PC-3 (cell line): ENCODE measurements at regions of chr22 and their contacts with region 1.

Region 1: DNA sequence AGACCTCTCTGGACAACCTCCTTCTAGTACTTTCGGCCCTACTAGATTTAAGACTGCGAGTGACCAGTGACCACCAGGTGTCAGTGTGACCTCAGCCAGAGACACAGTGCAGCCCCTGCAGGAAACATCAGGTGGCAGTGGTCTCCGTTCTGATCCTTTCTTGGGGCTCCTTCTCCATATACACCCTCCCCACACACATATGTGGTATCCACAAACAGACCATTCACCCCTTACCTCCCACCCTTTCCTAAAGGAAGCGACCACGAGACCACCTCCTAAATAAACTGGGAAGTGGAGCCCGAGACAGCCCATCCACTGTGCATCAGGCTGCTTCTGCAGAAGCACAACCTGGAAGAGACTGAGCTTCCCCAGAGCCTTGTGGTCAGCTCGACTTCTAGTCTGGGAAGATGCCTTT is 38.5 kb upstream of the CYP2D6 start:
- DNase-seq: peak; percentile 64
- ATAC-seq: peak; percentile 73
- H3K4me3 ChIP-seq: no peak overlapping the region
- H3K27ac ChIP-seq: no peak overlapping the region
- H3K4me1 ChIP-seq: no peaks in the 10 kb centered on the region
- H3K27me3 ChIP-seq: no peaks in the 10 kb centered on the region
- CTCF ChIP-seq: peak; percentile 91

Region 2: DNA sequence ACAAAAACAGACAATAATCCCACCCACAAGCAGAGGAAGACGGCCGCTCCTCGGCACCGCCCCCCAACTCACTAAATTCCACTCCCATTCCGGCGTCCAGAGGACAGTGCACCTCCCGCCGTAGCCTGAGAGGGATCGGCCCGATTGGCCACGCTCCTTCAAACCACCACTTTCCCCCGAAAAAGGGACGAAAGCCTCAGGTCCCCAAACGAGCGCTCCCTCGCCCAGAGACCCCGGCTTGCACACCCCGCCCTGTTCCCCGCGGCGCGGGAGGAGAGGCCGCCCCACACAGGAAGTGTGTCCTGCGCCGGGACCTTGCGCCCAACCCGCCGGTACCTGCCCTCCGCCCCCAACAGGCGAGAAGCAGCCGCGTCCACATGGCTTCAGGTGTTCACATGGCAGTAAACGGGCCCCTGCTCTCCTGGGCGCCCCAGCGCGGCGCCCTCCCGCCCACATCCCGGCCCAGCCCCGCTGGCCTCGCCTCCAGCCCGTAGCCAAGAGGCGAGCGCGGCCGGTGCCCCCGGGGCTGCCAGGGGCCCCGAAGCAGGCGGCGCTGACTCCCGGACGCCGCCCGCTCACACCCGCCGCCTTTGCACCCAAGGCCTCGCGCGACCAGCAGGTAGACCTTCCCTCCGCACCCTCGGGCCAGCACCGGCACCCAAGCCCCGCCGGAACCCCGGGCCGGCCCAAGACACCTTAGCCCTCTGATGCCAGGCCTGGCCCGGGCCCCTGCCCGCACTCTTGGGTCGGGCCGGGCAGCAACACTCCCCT is 100.5 kb after region 1 on chr22:
- CTCF ChIA-PET with region 1: interaction called, 9 read pairs
- POLR2A ChIA-PET with region 1: no interaction called
- intact Hi-C with region 1: loop called (anchors 5 kb)
- DNase-seq: peak; percentile 61
- ATAC-seq: peak; percentile 75
- H3K4me3 ChIP-seq: peak overlapping the region; percentile 75
- H3K27ac ChIP-seq: peak overlapping the region; percentile 82
- H3K4me1 ChIP-seq: peaks cover 8% of the 10 kb centered on the region
- H3K27me3 ChIP-seq: no peaks in the 10 kb centered on the region
- CTCF ChIP-seq: no peak

Region 3: DNA sequence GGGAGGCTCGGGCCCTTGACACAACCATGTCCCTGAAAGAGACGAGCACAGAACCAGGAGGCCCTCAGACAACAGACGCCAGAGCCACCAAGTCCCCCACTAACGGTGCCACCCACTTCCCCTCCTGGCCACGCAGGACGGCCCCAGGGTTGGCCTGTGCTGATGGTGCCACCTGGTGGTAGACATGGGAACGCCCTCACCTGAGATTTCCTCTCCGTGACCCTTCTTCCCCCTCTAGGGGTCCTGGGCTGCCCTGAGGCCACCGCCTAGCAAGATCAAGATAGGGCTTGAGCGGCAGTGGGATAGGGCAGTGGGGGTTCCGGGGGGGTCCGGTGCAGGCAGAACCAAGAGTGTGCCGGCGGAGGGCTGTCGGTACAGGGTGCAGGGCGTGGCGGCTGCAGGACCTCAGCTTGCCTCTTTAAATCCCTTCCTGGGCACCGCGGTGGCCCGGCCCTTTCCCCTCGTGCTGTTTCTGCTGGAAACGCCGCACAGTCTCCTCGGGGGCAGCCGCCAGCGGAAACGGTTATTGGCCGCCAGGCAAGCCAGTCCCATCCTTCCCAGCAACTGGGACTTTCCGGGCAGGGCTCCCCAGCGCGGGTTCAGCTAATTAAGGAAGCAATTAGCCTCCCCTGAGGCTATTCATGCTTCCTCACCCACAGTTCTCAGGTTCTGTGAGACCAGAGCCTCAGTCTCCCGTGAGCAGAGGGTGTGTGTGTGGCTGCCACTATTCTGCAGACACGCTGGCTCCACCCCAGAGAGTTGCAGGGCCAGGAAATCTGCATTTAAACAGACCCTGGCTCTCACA is 268.6 kb after region 1 on chr22:
- CTCF ChIA-PET with region 1: no interaction called
- POLR2A ChIA-PET with region 1: no interaction called
- intact Hi-C with region 1: loop called (anchors 1 kb)
- DNase-seq: peak; percentile 69
- ATAC-seq: peak; percentile 87
- H3K4me3 ChIP-seq: peak overlapping the region; percentile 71
- H3K27ac ChIP-seq: no peak overlapping the region
- H3K4me1 ChIP-seq: peaks cover 6% of the 10 kb centered on the region; the same call in 1 of the 2 replicates
- H3K27me3 ChIP-seq: no peaks in the 10 kb centered on the region
- CTCF ChIP-seq: peak; percentile 92